Naive thymus-derived CD4-positive, alpha-beta T cell (primary cell): ENCODE measurements at regions of chr4 and their contacts with region 1.

Region 1: DNA sequence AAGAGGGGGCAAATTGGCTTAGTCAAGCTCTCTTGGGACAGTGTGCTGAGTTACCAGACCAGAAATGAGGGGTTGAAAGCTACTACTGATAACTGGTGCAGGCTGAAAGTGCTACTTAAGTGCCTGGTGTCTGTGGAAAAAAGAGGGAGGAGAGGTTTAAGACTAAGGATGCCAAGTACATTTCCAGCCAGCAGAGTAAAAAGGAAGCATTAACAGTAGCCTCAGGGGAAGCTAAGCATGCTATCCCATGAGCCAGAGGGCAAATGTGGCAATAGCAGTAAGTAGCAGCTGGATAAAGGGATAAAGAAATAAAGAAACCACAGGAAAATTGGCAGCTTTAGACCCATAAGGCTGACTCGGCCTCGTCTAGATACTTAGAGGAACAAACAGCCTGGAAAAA is 196.3 kb upstream of the MAB21L2 start:
- DNase-seq: no peak
- ATAC-seq: no peak
- H3K4me3 ChIP-seq: no peak overlapping the region
- H3K4me3 Mint-ChIP-seq: no peak overlapping the region
- H3K27ac ChIP-seq: no peak overlapping the region
- H3K27ac Mint-ChIP-seq: peak overlapping the region in 1 of 9 donors; percentile 5
- H3K4me1 ChIP-seq: no peaks in the 10 kb centered on the region
- H3K4me1 Mint-ChIP-seq: peaks cover 0 to 4% (median 0%) of the 10 kb centered on the region in 7 donors
- H3K27me3 ChIP-seq: no peaks in the 10 kb centered on the region
- H3K27me3 Mint-ChIP-seq: no peaks in the 10 kb centered on the region

Region 2: GRCh38 chr4:150371869-150372268 is 13.7 kb before region 1 on chr4:
- CTCF ChIA-PET with region 1: no interaction called
- POLR2A ChIA-PET with region 1: no interaction called
- intact Hi-C with region 1: loop called in 1 of 2 experiments (anchors 2 kb)
- DNase-seq: no peak
- ATAC-seq: no peak
- H3K4me3 ChIP-seq: no peak overlapping the region
- H3K4me3 Mint-ChIP-seq: no peak overlapping the region
- H3K27ac ChIP-seq: no peak overlapping the region
- H3K27ac Mint-ChIP-seq: no peak overlapping the region
- H3K4me1 ChIP-seq: no peaks in the 10 kb centered on the region
- H3K4me1 Mint-ChIP-seq: peaks cover 0 to 5% (median 0%) of the 10 kb centered on the region in 7 donors
- H3K27me3 ChIP-seq: no peaks in the 10 kb centered on the region
- H3K27me3 Mint-ChIP-seq: no peaks in the 10 kb centered on the region